Naive thymus-derived CD4-positive, alpha-beta T cell (primary cell): ENCODE measurements at regions of chrX and their contacts with region 1.

Region 1: GRCh38 chrX:30181353-30181752 is 34.0 kb upstream of the MAGEB2 start:
- DNase-seq: no peak
- ATAC-seq: no peak
- H3K4me3 ChIP-seq: no peak overlapping the region
- H3K4me3 Mint-ChIP-seq: no peak overlapping the region
- H3K27ac ChIP-seq: no peak overlapping the region
- H3K27ac Mint-ChIP-seq: no peak overlapping the region
- H3K4me1 ChIP-seq: no peaks in the 10 kb centered on the region
- H3K4me1 Mint-ChIP-seq: peaks cover 0 to 2% (median 0%) of the 10 kb centered on the region in 7 donors
- H3K27me3 ChIP-seq: no peaks in the 10 kb centered on the region
- H3K27me3 Mint-ChIP-seq: peaks cover 0 to 10% (median 6%) of the 10 kb centered on the region in 5 donors

Region 2: DNA sequence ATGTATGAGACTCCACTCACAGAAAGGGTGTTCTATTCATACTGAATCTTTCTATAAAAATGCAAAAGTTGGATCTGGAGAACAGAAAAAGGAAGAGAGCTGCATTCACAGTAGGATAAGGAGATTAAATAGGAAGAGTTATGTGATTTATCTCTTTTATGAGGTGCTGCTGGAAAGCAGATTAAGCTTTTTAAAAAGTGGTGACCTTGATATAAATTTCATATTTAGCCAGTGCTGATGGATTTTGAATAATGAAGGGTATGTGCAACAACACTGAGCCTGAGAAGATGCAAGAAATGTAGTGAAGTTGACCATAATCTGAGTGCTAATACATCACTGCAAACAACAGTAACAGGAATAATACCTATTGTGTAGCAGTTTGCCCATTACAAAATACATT is 798.5 kb before region 1 on chrX:
- CTCF ChIA-PET with region 1: no interaction called
- POLR2A ChIA-PET with region 1: no interaction called
- intact Hi-C with region 1: no loop called
- DNase-seq: no peak
- ATAC-seq: no peak
- H3K4me3 ChIP-seq: no peak overlapping the region
- H3K4me3 Mint-ChIP-seq: no peak overlapping the region
- H3K27ac ChIP-seq: no peak overlapping the region
- H3K27ac Mint-ChIP-seq: no peak overlapping the region
- H3K4me1 ChIP-seq: no peaks in the 10 kb centered on the region
- H3K4me1 Mint-ChIP-seq: no peaks in the 10 kb centered on the region
- H3K27me3 ChIP-seq: no peaks in the 10 kb centered on the region
- H3K27me3 Mint-ChIP-seq: no peaks in the 10 kb centered on the region

Region 3: DNA sequence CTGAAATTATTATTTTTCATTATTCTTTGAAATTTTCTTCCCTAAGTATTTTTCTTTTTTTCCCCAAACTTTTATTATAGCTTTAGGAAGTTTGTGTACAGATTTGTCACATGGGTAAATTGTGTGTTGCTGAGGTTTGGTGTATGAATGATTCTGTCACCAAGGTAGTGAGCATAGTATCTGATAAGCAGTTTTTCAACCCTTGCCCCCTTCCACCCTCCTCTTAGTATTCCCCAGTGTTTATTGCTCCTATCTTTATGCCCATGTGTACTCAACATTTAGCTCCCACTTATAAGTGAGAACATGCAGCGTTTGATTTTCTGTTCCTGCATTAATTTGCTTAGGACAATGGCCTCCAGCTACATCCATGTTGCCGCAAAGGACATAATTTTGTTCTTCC is 69.9 kb before region 1 on chrX:
- CTCF ChIA-PET with region 1: no interaction called
- POLR2A ChIA-PET with region 1: no interaction called
- intact Hi-C with region 1: loop called in 1 of 2 experiments (anchors 2 kb)
- DNase-seq: no peak
- ATAC-seq: no peak
- H3K4me3 ChIP-seq: no peak overlapping the region
- H3K4me3 Mint-ChIP-seq: no peak overlapping the region
- H3K27ac ChIP-seq: no peak overlapping the region
- H3K27ac Mint-ChIP-seq: no peak overlapping the region
- H3K4me1 ChIP-seq: no peaks in the 10 kb centered on the region
- H3K4me1 Mint-ChIP-seq: no peaks in the 10 kb centered on the region
- H3K27me3 ChIP-seq: no peaks in the 10 kb centered on the region
- H3K27me3 Mint-ChIP-seq: no peaks in the 10 kb centered on the region